ENCODE measurements at regions of chr17 and their contacts with region 1.

Region 1: GRCh38 chr17:7004398-7005253 is 7.8 kb upstream of the RNASEK start:
- DNase-seq: peak; percentile 52
- ATAC-seq: peak; percentile 95
- H3K4me3 Mint-ChIP-seq: no peak overlapping the region
- H3K27ac Mint-ChIP-seq: no peak overlapping the region
- H3K4me1 Mint-ChIP-seq: peaks cover 21% of the 10 kb centered on the region
- H3K27me3 Mint-ChIP-seq: no peaks in the 10 kb centered on the region
- CTCF ChIP-seq: peak; percentile 90

Region 2: DNA sequence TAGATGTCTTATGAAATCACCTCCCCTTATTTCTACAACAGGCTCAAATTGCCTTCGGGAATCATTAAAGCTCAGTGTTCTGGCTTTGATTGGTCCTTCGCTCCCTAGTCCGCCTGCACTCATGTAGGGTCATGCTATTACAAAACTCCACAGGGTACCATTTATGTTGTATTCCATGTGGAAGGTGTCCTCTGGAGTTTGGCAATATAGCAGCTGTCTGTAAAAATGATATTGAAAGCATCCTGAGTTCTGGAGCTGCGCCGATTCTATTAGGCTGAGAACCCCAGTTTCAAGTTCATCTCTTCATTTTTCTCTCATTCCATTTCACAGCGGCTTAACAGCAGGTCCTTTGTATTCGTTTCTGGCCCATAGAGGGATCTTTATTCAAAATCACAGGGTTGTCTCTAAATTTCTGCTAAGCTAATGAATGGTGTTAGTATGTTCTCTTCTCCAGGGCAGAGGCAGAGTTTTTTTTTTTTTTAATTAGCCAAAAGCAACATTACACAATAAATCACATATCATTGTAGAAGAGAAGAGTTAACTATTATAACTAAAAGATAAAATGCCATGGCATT is 101.2 kb before region 1 on chr17:
- CTCF ChIA-PET with region 1: interaction called, 91 read pairs
- POLR2A ChIA-PET with region 1: no interaction called
- intact Hi-C with region 1: no loop called
- DNase-seq: no peak
- ATAC-seq: no peak
- H3K4me3 Mint-ChIP-seq: no peak overlapping the region
- H3K27ac Mint-ChIP-seq: no peak overlapping the region
- H3K4me1 Mint-ChIP-seq: no peaks in the 10 kb centered on the region
- H3K27me3 Mint-ChIP-seq: no peaks in the 10 kb centered on the region
- CTCF ChIP-seq: no peak

Region 3: GRCh38 chr17:6936370-6937028 is 68.1 kb before region 1 on chr17:
- CTCF ChIA-PET with region 1: interaction called, 12 read pairs
- POLR2A ChIA-PET with region 1: no interaction called
- intact Hi-C with region 1: no loop called
- DNase-seq: no peak
- ATAC-seq: peak; percentile 58
- H3K4me3 Mint-ChIP-seq: peak overlapping the region; percentile 4
- H3K27ac Mint-ChIP-seq: peak overlapping the region; percentile 24
- H3K4me1 Mint-ChIP-seq: no peaks in the 10 kb centered on the region
- H3K27me3 Mint-ChIP-seq: no peaks in the 10 kb centered on the region
- CTCF ChIP-seq: no peak

Region 4: GRCh38 chr17:6986676-6987075 is 17.9 kb before region 1 on chr17:
- CTCF ChIA-PET with region 1: interaction called, 20 read pairs
- POLR2A ChIA-PET with region 1: interaction called, 3 read pairs
- intact Hi-C with region 1: no loop called
- DNase-seq: no peak
- ATAC-seq: no peak
- H3K4me3 Mint-ChIP-seq: no peak overlapping the region
- H3K27ac Mint-ChIP-seq: no peak overlapping the region
- H3K4me1 Mint-ChIP-seq: no peaks in the 10 kb centered on the region
- H3K27me3 Mint-ChIP-seq: no peaks in the 10 kb centered on the region
- CTCF ChIP-seq: no peak

Region 5: DNA sequence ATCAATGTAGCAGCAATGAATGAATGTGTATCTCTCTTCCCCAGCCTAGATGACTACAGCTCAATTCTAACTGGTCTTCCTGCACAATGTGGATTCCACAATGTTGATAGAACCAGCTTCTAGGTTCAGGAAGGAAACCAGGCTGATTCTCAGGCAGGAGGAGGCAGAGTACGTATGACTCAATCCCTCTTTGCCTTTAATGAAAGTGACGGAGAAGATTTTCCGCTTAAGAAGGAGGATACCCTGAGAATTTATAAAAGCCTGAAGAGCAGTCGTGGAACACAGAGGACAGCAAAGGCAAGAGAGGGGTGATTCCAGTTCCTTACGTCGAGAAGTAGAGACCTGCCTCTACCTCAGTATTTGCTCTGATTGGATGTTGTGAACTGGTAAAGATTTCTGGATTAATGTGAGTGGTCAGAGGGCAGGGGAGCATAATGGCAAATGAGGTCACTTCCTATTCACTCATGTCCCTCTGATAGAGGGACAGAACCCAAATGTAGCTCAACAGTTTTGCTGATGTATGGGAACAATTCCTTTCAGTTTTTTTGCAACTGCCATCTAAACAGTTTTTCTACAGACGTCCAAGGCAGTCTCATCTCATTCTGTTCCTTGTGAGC is 54.3 kb after region 1 on chr17:
- CTCF ChIA-PET with region 1: no interaction called
- POLR2A ChIA-PET with region 1: no interaction called
- intact Hi-C with region 1: no loop called
- DNase-seq: no peak
- ATAC-seq: no peak
- H3K4me3 Mint-ChIP-seq: no peak overlapping the region
- H3K27ac Mint-ChIP-seq: no peak overlapping the region
- H3K4me1 Mint-ChIP-seq: peaks cover 18% of the 10 kb centered on the region
- H3K27me3 Mint-ChIP-seq: peaks cover 9% of the 10 kb centered on the region
- CTCF ChIP-seq: no peak

Region 6: GRCh38 chr17:7191571-7192270 is 187.1 kb after region 1 on chr17:
- CTCF ChIA-PET with region 1: no interaction called
- POLR2A ChIA-PET with region 1: no interaction called
- intact Hi-C with region 1: no loop called
- DNase-seq: peak; percentile 60
- ATAC-seq: peak; percentile 83
- H3K4me3 Mint-ChIP-seq: no peak overlapping the region
- H3K27ac Mint-ChIP-seq: no peak overlapping the region
- H3K4me1 Mint-ChIP-seq: no peaks in the 10 kb centered on the region
- H3K27me3 Mint-ChIP-seq: no peaks in the 10 kb centered on the region
- CTCF ChIP-seq: no peak